HEK293 (cell line): ENCODE measurements at regions of chr5 and their contacts with region 1.

Region 1: DNA sequence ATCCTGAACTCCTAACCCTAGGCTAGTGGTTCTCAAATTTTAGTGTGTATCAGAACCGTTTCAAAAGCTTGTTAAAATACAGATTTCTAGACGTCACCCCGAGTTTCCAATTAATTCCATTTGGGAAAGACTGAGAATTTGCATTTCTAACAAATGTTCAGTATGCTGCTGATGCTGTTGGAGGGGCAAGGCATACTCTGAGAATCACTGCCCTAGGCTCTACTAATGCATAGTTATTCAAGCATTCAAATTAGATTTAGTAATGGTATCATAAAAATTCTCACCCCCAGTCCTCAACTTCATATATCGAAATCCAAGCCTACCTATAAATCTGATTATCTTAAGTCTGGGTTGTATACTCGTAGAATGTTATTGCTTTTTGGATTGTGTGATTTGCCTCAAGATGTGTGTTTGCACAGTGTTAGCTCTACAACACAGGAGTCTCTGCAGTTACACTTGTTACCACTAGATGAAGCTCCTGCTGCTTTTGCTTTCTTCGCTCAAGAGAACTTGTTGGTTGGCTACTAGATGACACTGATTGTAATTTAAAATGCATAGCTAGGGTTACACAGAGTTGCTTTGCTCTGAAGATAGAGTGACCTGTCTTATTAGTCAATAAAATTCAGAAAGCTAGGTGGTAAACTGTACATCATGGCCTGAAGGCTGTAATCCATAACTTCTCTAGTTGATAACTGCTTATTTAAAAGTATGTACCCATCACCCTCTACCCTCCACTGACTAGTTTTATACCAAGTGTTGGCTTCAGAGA is 7.5 kb upstream of the ERAP2 start:
- H3K4me3 ChIP-seq: no peak overlapping the region
- H3K27ac ChIP-seq: no peak overlapping the region
- H3K4me1 ChIP-seq: no peaks in the 10 kb centered on the region
- CTCF ChIP-seq: peak; percentile 65

Region 2: GRCh38 chr5:96209829-96210228 is 659.0 kb before region 1 on chr5:
- CTCF ChIA-PET with region 1: no interaction called
- POLR2A ChIA-PET with region 1: no interaction called
- H3K4me3 ChIP-seq: no peak overlapping the region
- H3K27ac ChIP-seq: no peak overlapping the region
- H3K4me1 ChIP-seq: no peaks in the 10 kb centered on the region
- CTCF ChIP-seq: no peak

Region 3: DNA sequence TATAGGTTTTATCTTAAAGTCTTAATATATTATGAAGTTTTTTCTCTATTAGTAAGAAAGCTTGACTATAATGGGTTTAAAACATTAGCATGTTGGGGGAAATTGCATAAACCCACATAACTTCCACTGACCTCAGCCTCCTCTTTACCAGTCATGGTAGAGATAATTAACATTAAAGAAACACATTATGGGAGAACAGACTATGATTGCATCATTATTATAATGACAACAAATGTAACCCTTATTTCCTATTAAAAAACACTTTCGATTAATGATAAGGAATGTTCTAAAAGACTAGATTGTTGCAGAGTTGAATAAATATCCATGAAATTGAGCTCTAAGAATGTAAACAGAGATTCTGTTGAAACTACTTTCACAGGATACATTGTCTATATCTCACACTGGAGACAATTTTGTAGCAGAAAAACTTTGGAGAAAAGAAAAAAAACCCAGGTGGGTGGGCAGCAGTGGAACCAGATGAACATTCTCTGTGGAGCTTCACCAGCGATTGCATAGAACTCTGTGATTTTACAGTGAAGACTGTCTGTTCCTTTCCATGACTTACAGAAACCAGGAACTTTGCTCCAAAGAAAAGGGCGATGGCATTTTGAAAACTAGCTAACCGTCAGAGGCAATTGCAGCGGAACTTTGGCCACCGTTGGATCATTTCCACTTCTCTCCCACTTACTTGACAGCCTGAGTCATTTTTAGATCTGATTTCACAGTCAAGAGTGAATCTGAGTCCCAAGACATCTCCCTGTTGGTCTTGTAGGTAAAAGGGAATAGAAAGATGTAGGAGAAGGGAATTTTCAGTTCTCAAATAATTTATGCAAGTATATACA is 13.5 kb before region 1 on chr5:
- CTCF ChIA-PET with region 1: interaction called, 34 read pairs
- POLR2A ChIA-PET with region 1: no interaction called
- H3K4me3 ChIP-seq: no peak overlapping the region
- H3K27ac ChIP-seq: no peak overlapping the region
- H3K4me1 ChIP-seq: no peaks in the 10 kb centered on the region; the same call in 1 of the 2 replicates
- CTCF ChIP-seq: no peak

Region 4: DNA sequence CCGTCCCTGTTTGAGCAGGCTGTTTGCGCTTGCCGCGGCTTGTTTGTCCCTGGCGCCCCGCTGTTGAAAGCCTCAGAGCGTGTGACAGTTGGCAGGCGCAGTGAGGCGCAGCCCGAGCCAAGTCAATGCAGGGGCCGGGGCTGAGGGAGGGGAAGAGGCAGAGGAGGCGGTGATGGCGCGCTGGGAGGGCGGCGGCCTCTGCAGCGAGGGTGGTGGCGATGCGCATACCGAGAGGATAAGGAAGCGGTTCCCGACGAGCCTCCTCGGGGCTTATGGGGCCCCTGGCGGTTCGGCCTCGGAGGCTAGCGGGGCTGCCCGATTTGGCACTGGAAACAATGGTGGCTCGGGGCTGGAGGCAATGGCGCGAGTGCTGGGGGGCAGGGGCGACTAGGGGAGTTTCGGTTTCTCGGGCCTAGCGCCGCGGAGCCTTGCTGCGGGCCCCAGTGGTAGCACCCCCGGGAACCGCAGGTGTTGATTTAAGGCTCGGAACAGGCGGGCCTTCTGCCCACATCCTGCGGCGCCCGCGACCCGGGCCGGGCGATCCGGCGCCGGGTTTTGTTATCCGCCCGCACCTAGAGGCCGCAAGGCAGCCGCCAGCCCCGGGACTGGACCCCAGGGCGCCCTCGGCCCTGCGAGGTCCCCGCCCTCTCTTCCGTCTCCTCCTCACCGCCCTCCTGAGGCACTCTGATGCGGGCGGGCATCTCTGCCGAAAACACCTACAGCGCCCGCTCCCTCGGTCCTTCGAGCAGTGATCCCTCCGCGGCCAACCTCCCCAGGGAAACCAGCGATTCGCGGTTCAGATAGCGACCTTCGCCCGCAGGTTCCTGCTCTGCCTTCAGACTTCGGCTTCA is 66.1 kb after region 1 on chr5:
- CTCF ChIA-PET with region 1: interaction called, 12 read pairs
- POLR2A ChIA-PET with region 1: interaction called, 8 read pairs
- H3K4me3 ChIP-seq: peak overlapping the region; percentile 94
- H3K27ac ChIP-seq: peak overlapping the region; percentile 97
- H3K4me1 ChIP-seq: peaks cover 15% of the 10 kb centered on the region
- CTCF ChIP-seq: peak; percentile 91

Region 5: GRCh38 chr5:96997265-96997859 is 128.6 kb after region 1 on chr5:
- CTCF ChIA-PET with region 1: interaction called, 34 read pairs
- POLR2A ChIA-PET with region 1: no interaction called
- H3K4me3 ChIP-seq: no peak overlapping the region
- H3K27ac ChIP-seq: no peak overlapping the region
- H3K4me1 ChIP-seq: no peaks in the 10 kb centered on the region
- CTCF ChIP-seq: no peak

Region 6: DNA sequence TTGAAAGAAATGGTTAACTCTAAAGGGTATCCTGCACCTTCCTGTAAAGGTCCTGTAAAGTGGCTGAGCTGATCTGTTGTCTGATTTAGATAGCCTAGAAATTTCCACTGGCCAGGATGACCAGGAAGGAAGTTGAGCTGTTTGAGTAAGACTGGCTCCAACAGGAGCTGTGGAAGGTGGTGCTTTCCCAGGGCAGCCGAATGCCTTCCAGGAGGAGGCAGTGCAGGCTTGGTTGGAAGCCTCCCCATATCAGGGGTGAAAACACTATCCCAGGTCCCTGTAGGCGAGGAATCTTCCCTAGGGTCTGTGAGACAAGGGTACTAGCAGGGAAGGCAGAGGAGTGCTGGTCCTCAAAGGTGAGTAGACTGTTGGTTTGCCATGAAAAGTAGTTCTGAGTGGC is 175.3 kb after region 1 on chr5:
- CTCF ChIA-PET with region 1: interaction called, 25 read pairs
- POLR2A ChIA-PET with region 1: no interaction called
- H3K4me3 ChIP-seq: no peak overlapping the region
- H3K27ac ChIP-seq: no peak overlapping the region
- H3K4me1 ChIP-seq: no peaks in the 10 kb centered on the region
- CTCF ChIP-seq: no peak

Region 7: DNA sequence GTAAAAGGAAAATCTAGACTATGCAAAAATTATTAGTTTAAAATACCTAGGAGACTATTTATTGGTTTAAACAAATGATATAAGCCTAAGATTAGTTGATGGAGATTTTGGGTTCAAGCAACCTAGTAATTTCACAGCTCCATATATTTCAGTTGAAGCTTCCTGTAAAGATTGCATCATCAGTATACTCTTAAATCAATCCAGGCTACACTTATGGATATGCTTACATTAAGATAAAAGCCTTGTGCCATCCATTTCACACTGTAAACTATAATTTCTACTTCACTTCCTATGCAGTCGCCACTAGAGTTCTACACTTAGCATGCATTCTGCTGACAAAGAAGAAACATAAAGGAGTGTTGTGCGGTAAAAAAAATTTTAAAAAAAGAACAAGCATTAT is 280.9 kb after region 1 on chr5:
- CTCF ChIA-PET with region 1: interaction called, 15 read pairs
- POLR2A ChIA-PET with region 1: no interaction called
- H3K4me3 ChIP-seq: no peak overlapping the region
- H3K27ac ChIP-seq: no peak overlapping the region
- H3K4me1 ChIP-seq: peaks cover 5% of the 10 kb centered on the region; the same call in 1 of the 2 replicates
- CTCF ChIP-seq: no peak